Left cardiac atrium (tissue), 4 donors: ENCODE measurements at regions of chr12 and their contacts with region 1.

Region 1: DNA sequence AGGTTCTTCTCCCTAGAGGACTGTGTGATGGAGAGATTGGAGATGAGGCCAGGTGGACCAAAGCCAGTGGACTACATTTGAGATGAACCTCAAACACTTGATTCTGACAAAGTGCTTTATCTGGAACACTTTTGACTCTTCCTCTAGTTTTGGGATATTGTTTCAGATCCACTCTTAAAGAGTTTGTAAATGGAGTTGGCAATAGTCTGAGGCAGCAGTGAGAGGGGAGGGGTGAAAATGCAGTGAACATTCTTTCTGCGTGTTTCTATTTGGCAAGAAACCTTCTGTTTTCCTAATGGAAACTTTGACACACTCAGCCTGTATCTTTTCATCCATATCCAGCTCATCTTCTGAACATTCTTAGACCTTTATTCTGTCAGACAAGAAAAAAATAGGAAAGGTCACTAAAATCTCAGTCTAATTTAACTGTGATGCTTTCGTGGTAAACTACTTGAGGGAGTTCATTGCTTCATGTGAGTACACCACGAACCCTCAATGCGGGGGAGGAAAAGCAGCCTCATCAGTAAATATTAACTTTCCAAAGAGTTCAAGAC is 57.4 kb upstream of the KCNJ8 start:
- DNase-seq: peak; percentile 29
- ATAC-seq: peak; percentile 68 to 75

Region 2: GRCh38 chr12:21940549-21941505 is 109.0 kb after region 1 on chr12 and contains the start of gene ABCC9:
- intact Hi-C with region 1: loop called in 1 of 2 experiments (anchors 10 kb)
- DNase-seq: peak; percentile 65
- ATAC-seq: peak; percentile 85 to 92
- total RNA-seq, gene ABCC9: 44.6 to 46.7 TPM